ENCODE measurements at regions of chrX and their contacts with region 1.

Region 1: GRCh38 chrX:154373340-154374306 is 811 bp downstream of the FLNA start:
- DNase-seq: peak; percentile 85
- ATAC-seq: peak; percentile 9
- H3K4me3 ChIP-seq: peak overlapping the region; percentile 64
- H3K27ac ChIP-seq: no peak overlapping the region
- H3K4me1 ChIP-seq: peaks cover 29% of the 10 kb centered on the region
- H3K27me3 ChIP-seq: no peaks in the 10 kb centered on the region
- CTCF ChIP-seq: peak; percentile 96

Region 2: DNA sequence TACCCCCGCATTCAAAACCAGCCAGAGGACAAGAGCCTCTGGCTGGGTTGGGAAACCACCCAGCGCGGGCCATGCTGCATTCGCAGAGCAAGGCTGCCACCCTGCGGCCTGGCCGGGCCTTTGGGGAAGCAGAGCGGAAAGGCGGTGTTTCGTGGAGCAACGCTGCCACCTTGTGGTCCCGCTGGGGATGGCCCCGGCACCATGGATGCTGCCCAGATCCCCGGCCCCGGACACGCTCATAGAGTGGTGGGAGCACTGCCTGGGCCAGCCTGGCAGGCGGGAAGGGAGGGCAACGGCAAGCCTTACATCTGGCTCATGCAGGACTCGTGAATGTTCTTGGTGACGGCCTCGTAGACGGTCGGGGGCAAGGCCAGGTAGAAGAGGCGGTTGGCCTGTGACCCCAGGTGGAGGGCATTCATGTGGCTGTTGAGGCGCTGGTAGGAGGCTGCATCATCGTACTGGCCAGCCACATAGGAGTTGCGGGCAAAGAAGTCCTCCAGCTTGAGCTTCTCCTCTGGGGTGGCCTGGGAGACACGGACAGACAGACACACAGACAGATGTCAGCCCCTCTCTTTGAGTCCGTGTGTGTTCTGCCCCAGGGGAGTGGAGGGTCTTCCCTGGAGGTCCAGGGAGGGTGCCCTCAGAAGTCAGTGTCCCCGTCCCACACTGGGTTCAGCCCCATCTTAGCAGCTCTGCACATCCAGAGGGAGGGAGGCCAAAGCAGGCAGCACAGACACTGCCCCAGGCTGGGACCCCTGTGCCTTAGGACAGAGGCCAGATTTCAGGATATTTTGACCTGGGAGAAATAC is 161.4 kb after region 1 on chrX:
- CTCF ChIA-PET with region 1: no interaction called
- POLR2A ChIA-PET with region 1: no interaction called
- intact Hi-C with region 1: loop called (anchors 1 kb)
- DNase-seq: peak; percentile 85
- ATAC-seq: peak; percentile 89
- H3K4me3 ChIP-seq: no peak overlapping the region
- H3K27ac ChIP-seq: no peak overlapping the region
- H3K4me1 ChIP-seq: peaks cover 3% of the 10 kb centered on the region; the same call in 1 of the 2 replicates
- H3K27me3 ChIP-seq: no peaks in the 10 kb centered on the region
- CTCF ChIP-seq: peak; percentile 97

Measured in PC-3 (cell line).